Endothelial cell of umbilical vein (primary cell): ENCODE measurements at regions of chr1 and their contacts with region 1.

Region 1: DNA sequence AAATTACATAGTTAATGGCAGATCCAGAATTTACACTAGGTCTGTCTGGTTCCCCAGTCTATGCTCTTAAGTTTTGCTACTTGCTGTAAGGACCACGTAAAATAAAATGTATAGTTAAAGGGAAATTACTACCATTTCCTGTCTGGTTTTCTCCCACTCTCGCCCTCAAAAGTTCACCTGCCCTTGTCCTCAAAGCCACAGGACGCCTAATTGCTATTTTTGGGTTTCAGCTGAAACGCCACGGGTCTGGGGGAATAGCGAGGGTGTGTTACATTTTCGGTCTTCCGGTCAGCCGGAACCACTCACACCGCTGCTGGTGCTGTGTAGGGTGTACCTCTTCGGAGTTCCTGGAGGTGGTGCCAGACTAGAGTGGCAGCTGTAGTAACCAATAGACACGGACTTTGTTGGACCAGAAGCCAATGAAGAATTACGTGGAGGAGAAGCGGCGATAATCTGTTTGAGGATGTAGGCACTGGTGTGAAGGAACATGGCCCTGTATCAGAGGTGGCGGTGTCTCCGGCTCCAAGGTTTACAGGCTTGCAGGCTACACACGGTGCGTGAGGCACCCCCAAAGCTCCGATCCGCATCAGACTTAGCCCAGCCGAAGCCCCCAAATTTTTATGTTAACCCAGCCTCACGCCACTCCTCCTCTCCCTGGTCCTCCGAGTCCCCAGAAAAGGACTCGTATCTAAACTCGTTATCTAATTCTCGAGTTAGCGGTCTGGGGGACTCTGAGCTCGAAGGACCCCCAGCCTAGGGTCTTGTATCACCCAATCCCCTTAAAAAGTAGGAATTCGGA is at the start of gene TARS2:
- DNase-seq: peak; percentile 99
- H3K4me3 ChIP-seq: peak within 1 kb of the TSS; percentile 53 to 81 (median 65)
- H3K27ac ChIP-seq: peak within 1 kb of the TSS; percentile 63
- H3K4me1 ChIP-seq: peaks cover 7% of the 10 kb centered on the region
- H3K27me3 ChIP-seq: no peaks in the 10 kb centered on the region
- CTCF ChIP-seq: no peak
- POLR2A ChIP-seq: peak; percentile 84
- total RNA-seq, gene TARS2: 20.6 and 21.5 TPM in 2 replicates

Region 2: DNA sequence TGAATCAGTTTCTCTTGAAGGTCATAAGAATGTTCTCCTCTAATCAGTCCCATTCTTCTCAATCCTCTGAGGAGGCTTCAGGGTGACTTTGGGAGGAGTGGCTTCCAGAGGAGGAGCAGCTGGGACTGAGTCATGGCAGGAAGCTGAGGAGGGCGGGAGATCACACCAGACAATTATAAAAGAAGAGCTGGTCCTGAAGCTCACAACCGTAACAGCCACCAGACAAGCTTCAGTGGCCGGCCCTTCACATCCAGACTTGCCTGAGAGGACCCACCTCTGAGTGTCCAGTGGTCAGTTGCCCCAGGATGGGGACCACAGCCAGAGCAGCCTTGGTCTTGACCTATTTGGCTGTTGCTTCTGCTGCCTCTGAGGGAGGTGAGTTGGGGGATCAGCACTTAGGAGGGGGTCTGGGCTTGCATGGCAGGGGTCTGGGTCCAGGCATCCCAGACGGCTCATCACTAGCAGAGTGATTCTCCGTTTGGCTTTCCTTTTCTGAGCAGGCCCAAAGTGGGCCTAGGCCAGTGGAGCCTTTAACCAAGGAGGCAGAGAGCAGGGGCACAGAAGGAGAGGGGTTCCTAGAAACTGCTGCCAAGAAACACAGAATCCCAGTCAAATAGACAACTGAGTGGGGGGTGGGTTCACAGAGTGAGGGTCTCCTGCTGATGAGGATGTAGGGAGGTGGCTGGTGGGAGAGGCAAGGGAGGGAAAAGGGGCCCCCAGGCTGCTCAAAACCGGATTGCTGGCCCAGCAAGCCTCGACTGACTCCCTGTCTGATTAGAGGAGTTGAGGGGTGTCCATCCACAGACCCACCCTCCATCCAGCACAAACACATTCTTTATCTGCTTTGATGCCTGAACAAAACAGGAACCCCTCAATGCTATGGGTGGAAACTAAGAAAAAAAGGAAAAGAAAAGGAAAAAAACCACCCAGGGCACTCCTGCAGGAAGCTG is 21.0 kb after region 1 on chr1 and contains the start of gene ECM1:
- CTCF ChIA-PET with region 1: interaction called, 6 read pairs
- POLR2A ChIA-PET with region 1: interaction called, 4 read pairs
- dilution Hi-C with region 1: no loop called
- intact Hi-C with region 1: loop called (anchors 1 kb)
- DNase-seq: peak; percentile 71
- H3K4me3 ChIP-seq: no peak within 1 kb of the TSS
- H3K27ac ChIP-seq: peak within 1 kb of the TSS; percentile 34
- H3K4me1 ChIP-seq: peaks cover 10% of the 10 kb centered on the region
- H3K27me3 ChIP-seq: no peaks in the 10 kb centered on the region
- CTCF ChIP-seq: no peak
- POLR2A ChIP-seq: no peak
- total RNA-seq, gene ECM1: 7.2 and 7.3 TPM in 2 replicates